ENCODE measurements at regions of chr2 and their contacts with region 1.

Region 1: DNA sequence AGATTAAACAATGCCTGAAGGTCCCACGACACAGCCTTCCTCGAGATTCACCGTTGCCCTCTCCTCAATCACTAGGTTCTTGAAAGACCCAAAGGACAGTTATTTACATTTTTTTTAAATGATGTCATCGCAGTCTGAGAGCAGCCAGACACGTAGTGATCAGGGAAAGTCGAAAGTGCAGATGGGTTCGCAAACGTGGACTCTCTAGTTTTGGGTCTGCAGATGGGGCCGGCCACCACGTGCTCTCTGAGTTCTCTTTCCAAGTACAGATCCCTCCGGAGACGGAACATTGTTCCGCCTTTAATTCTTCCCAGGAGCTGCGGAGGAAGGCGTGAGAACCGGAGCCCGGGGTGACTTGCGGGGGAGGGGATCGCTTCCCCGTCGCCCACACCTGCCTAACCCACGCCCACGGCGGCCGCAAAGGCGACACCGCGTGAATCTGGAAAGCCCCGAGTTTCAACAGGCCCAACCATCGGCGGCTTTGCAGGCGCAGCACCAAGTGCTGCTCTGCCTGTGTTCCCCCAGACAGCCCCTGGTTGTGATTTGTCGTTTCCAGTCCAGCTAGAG is 54.3 kb downstream of the PKDCC start:
- DNase-seq: peak; percentile 63 to 81 (median 76)
- ATAC-seq: peak; percentile 40 to 73 (median 60)
- H3K4me3 ChIP-seq: peak overlapping the region in 10 of 12 donors; percentile 10 to 59 (median 52)
- H3K27ac ChIP-seq: peak overlapping the region; percentile 63 to 91 (median 88)
- H3K4me1 ChIP-seq: peaks cover 0 to 98% (median 32%) of the 10 kb centered on the region in 12 donors
- H3K27me3 ChIP-seq: no peaks in the 10 kb centered on the region
- CTCF ChIP-seq: no peak
- POLR2A ChIP-seq: no peak

Region 2: GRCh38 chr2:42141687-42142546 is 39.8 kb after region 1 on chr2:
- intact Hi-C with region 1: loop called in 7 of 10 experiments (anchors 2 to 5 kb)
- DNase-seq: peak; percentile 65 to 88 (median 79)
- ATAC-seq: peak; percentile 85 to 94 (median 86)
- H3K4me3 ChIP-seq: peak overlapping the region in 9 of 12 donors; percentile 5 to 33 (median 25)
- H3K27ac ChIP-seq: peak overlapping the region; percentile 61 to 94 (median 86)
- H3K4me1 ChIP-seq: peaks cover 0 to 64% (median 46%) of the 10 kb centered on the region in 12 donors
- H3K27me3 ChIP-seq: no peaks in the 10 kb centered on the region
- CTCF ChIP-seq: no peak
- POLR2A ChIP-seq: no peak

Region 3: DNA sequence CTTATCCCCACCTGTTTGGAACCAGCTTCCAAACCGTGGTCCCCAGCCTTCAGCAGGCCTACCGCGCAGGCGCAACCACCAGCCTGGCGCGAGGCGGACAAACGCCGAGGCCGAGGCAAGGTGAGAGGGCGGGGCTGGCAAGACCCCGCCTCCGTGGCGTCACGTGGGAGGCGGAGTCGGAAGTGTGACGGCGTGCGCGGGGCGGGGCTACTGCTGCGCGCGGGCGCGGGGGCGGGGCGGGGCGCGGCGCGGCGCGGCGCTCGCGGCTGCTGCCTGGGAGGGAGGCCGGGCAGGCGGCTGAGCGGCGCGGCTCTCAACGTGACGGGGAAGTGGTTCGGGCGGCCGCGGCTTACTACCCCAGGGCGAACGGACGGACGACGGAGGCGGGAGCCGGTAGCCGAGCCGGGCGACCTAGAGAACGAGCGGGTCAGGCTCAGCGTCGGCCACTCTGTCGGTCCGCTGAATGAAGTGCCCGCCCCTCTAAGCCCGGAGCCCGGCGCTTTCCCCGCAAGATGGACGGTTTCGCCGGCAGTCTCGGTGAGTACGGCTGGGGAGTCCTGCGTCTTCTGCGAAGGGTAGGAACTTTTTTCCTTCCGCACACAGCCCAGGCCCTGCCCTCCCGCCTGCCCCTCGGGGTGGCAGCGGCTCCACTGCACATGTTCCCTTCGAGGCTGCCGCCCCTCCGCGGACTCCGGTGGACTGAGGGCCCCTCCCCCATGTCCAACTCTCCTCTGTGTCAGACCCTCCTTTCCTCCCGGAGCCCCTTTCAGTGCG is 67.2 kb after region 1 on chr2 and contains the start of gene EML4:
- intact Hi-C with region 1: loop called in 2 of 10 experiments (anchors 2 kb)
- DNase-seq: peak; percentile 91 to 97 (median 92)
- ATAC-seq: peak; percentile 97 to 98 (median 98)
- H3K4me3 ChIP-seq: peak within 1 kb of the TSS; percentile 57 to 96 (median 85)
- H3K27ac ChIP-seq: peak within 1 kb of the TSS in 11 of 12 donors; percentile 77 to 93 (median 87)
- H3K4me1 ChIP-seq: peaks cover 0 to 46% (median 25%) of the 10 kb centered on the region in 12 donors
- H3K27me3 ChIP-seq: no peaks in the 10 kb centered on the region
- CTCF ChIP-seq: no peak
- POLR2A ChIP-seq: peak in 1 of 2 donors; percentile 68
- total RNA-seq, gene EML4: 3.5 to 32.8 (median 5.7) TPM

Region 4: GRCh38 chr2:42328148-42328833 is 226.2 kb after region 1 on chr2:
- intact Hi-C with region 1: loop called in 4 of 10 experiments (anchors 5 to 10 kb)
- DNase-seq: no peak
- ATAC-seq: peak in 1 of 4 donors; percentile 34
- H3K4me3 ChIP-seq: no peak overlapping the region
- H3K27ac ChIP-seq: no peak overlapping the region
- H3K4me1 ChIP-seq: no peaks in the 10 kb centered on the region
- H3K27me3 ChIP-seq: no peaks in the 10 kb centered on the region
- CTCF ChIP-seq: peak in 11 of 12 donors; percentile 22 to 57 (median 43)
- POLR2A ChIP-seq: no peak

Region 5: GRCh38 chr2:42510608-42511243 is 408.6 kb after region 1 on chr2:
- intact Hi-C with region 1: no loop called
- DNase-seq: no peak
- ATAC-seq: peak in 1 of 4 donors; percentile 13
- H3K4me3 ChIP-seq: no peak overlapping the region
- H3K27ac ChIP-seq: no peak overlapping the region
- H3K4me1 ChIP-seq: peaks cover 0 to 6% (median 0%) of the 10 kb centered on the region in 12 donors
- H3K27me3 ChIP-seq: peaks cover 0 to 4% (median 0%) of the 10 kb centered on the region in 9 donors
- CTCF ChIP-seq: no peak
- POLR2A ChIP-seq: no peak